ENCODE measurements at regions of chr4 and their contacts with region 1.

Region 1: GRCh38 chr4:125314676-125315575 is at the start of gene FAT4:
- DNase-seq: peak; percentile 96 to 98 (median 98)
- ATAC-seq: peak; percentile 93 to 97 (median 96)
- H3K4me3 ChIP-seq: peak within 1 kb of the TSS; percentile 67 to 97 (median 82)
- H3K27ac ChIP-seq: peak within 1 kb of the TSS; percentile 87 to 96 (median 92)
- H3K4me1 ChIP-seq: peaks cover 0 to 38% (median 28%) of the 10 kb centered on the region in 12 donors
- H3K27me3 ChIP-seq: peaks cover 0 to 35% (median 0%) of the 10 kb centered on the region in 9 donors
- CTCF ChIP-seq: peak in 10 of 12 donors; percentile 14 to 57 (median 26)
- POLR2A ChIP-seq: peak; percentile 40 to 89
- total RNA-seq, gene FAT4: 5.3 to 16.3 (median 11.8) TPM

Region 2: DNA sequence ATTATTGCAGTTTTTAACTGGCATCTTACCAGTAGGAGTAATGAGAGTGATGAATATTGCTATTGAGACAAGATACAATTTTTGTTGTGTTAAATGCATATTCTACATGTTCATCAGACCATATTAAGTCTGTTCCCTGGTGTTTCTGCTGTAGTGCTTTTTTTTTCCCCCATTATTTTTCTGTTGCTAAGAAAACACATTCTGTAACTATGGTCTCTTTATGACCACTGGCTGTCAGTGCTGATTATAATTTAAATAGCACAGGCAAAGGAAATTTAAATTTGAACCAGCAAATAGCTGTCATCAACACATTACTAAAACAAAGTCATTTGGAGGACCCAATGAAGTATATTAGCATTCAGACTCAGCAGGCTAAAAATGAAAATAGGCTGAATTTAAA is 504.1 kb before region 1 on chr4:
- intact Hi-C with region 1: no loop called
- DNase-seq: no peak
- ATAC-seq: no peak
- H3K4me3 ChIP-seq: no peak overlapping the region
- H3K27ac ChIP-seq: no peak overlapping the region
- H3K4me1 ChIP-seq: no peaks in the 10 kb centered on the region
- H3K27me3 ChIP-seq: no peaks in the 10 kb centered on the region
- CTCF ChIP-seq: no peak
- POLR2A ChIP-seq: no peak

Region 3: DNA sequence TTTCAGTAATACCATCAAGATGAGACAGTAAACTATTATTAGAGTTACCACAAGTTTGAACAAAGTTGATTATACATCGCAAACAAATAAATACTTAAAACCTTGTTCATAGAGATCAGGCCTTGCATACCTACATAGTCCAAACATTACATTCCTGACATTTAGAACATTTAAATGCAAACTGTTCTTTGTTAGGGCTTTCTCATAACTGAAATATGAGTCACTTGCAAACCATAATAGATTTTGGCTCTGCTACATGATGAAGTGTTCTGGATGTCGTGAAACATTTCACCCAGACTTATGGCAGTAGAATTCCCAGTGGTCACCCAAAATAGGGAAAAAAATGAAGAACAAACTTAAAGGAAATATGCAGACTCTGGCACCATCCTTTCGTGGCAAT is 74.8 kb after region 1 on chr4:
- intact Hi-C with region 1: loop called in 4 of 10 experiments (anchors 2 to 10 kb)
- DNase-seq: no peak
- ATAC-seq: peak; percentile 69 to 87 (median 79)
- H3K4me3 ChIP-seq: peak overlapping the region in 2 of 12 donors; percentile 3 to 15
- H3K27ac ChIP-seq: peak overlapping the region; percentile 10 to 87 (median 72)
- H3K4me1 ChIP-seq: peaks cover 10 to 71% (median 35%) of the 10 kb centered on the region in 12 donors
- H3K27me3 ChIP-seq: no peaks in the 10 kb centered on the region
- CTCF ChIP-seq: no peak
- POLR2A ChIP-seq: no peak

Region 4: GRCh38 chr4:125420526-125420925 is 105.6 kb after region 1 on chr4:
- intact Hi-C with region 1: loop called in 2 of 10 experiments (anchors 5 to 10 kb)
- DNase-seq: no peak
- ATAC-seq: no peak
- H3K4me3 ChIP-seq: no peak overlapping the region
- H3K27ac ChIP-seq: no peak overlapping the region
- H3K4me1 ChIP-seq: peaks cover 0 to 16% (median 3%) of the 10 kb centered on the region in 12 donors
- H3K27me3 ChIP-seq: no peaks in the 10 kb centered on the region
- CTCF ChIP-seq: no peak
- POLR2A ChIP-seq: no peak

Region 5: DNA sequence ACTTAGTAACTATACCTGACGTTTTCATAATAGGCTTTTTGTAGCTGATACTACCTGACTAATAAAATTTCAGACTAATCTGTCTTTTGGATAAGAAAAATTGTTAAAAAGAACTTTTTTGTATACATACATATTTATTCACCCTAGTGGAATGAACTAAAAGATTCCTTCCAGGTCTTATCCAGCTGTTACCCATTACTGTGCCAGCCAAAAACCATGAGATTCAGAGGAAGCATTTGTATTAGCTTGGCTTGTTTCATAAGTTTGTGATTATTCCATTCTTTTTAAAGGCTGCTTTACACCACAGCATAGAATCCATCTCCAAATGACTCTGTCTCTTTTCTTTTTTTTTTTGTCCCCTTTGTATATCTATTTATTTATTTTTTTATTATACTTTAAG is 149.2 kb after region 1 on chr4:
- intact Hi-C with region 1: no loop called
- DNase-seq: no peak
- ATAC-seq: no peak
- H3K4me3 ChIP-seq: no peak overlapping the region
- H3K27ac ChIP-seq: no peak overlapping the region
- H3K4me1 ChIP-seq: no peaks in the 10 kb centered on the region
- H3K27me3 ChIP-seq: no peaks in the 10 kb centered on the region
- CTCF ChIP-seq: no peak
- POLR2A ChIP-seq: no peak

Region 6: DNA sequence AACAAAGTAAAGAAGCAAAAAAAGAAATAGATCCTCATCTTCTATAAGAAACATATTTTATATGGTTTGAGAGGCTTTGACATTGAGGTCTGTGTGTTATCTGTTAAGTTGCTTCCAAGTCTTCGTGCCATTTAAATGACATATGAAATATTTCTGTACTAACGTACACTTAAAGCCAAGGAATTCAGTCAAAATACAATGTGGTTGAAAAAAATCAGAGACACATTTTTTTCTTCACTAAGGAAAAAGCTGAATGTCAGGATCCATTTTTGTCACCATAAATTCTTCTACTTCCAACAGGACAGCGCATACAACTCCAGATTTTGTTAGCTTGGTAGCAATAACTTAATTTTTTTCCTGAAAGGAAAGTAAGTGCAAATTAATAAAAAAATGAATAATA is 168.4 kb after region 1 on chr4:
- intact Hi-C with region 1: loop called in 2 of 10 experiments (anchors 5 kb)
- DNase-seq: no peak
- ATAC-seq: no peak
- H3K4me3 ChIP-seq: no peak overlapping the region
- H3K27ac ChIP-seq: no peak overlapping the region
- H3K4me1 ChIP-seq: no peaks in the 10 kb centered on the region
- H3K27me3 ChIP-seq: no peaks in the 10 kb centered on the region
- CTCF ChIP-seq: no peak
- POLR2A ChIP-seq: no peak

Region 7: DNA sequence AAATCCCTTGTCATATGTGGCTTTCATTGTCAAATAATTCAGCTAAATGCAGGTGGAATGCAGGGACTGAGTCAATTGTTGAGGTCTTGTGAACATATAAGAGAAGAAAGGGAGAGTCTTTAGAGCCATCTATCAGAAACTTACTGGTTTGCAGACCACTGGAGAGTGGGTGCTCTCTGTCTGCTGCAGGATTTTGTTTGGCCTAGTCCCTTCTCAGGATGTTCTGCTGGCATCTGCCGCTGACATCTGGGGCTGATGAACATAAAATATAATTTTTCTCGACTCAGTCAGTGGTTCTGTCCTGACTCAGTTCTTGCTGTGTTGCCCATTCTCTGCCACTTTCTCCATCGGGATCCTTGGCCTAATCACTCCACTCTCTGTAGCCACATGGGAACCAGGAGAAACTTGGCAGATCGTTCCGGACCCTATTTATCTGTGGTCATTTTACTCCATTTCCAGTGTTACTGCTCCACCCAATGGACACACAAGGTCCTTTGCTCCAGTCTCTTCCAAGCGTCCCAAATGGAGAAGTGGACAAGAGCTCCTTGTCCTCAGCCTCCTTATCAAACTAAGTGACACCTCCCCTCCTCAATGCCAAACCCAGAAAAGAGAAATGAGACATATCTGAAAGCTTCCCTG is 436.0 kb after region 1 on chr4:
- intact Hi-C with region 1: loop called in 2 of 10 experiments (anchors 1 kb)
- DNase-seq: peak in 2 of 5 donors; percentile 24 to 49
- ATAC-seq: peak; percentile 69 to 87 (median 86)
- H3K4me3 ChIP-seq: no peak overlapping the region
- H3K27ac ChIP-seq: no peak overlapping the region
- H3K4me1 ChIP-seq: peaks cover 0 to 11% (median 0%) of the 10 kb centered on the region in 12 donors
- H3K27me3 ChIP-seq: no peaks in the 10 kb centered on the region
- CTCF ChIP-seq: peak; percentile 11 to 70 (median 56)
- POLR2A ChIP-seq: no peak